PC-3 (cell line): ENCODE measurements at regions of chr12 and their contacts with region 1.

Region 1: GRCh38 chr12:122159882-122160281 is 14.1 kb downstream of the IL31 start:
- DNase-seq: no peak
- ATAC-seq: peak; percentile 38; the same call in 1 of the 2 replicates
- H3K4me3 ChIP-seq: no peak overlapping the region
- H3K27ac ChIP-seq: no peak overlapping the region
- H3K4me1 ChIP-seq: no peaks in the 10 kb centered on the region
- H3K27me3 ChIP-seq: no peaks in the 10 kb centered on the region
- CTCF ChIP-seq: no peak

Region 2: DNA sequence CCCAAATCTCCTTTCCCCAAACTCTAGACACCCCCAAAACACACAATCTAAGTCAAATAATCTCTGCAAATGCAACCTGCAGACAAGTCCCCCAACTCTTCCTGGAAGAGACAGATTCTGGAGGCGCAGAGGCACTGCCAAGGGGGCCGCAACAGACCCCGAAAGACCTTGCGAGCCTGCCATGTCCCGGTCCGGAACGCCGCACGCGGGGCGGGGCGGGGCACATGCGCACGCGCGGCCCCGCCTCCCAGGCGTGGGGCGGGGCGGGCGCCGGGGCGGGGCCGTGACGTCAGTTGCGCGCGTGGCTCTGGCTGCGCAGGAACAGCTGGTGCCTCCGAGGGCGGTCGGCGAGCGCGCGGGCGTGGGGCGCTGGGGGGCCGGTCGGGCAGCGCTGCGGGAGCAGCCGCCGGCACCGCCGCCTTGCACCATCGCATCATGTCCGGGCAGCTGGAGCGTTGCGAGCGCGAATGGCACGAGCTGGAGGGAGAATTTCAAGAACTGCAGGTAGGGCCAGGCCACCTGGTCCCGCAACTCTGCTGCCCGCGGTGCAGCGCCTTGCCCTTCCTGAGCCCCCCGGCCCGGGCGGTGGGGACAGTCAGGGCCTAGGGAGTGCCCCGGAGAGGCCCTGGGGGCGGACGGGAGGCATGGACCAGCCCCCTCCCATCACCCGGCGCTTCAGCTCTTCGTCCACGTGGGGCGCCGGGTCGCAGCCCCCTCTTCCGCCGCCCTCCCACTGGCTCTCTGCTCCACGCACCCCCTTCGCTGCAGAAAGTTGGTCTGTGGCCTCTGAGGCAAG is 447.2 kb before region 1 on chr12 and contains the start of gene TMEM120B:
- CTCF ChIA-PET with region 1: interaction called, 12 read pairs
- POLR2A ChIA-PET with region 1: no interaction called
- intact Hi-C with region 1: no loop called
- DNase-seq: peak; percentile 87
- ATAC-seq: peak; percentile 75
- H3K4me3 ChIP-seq: peak within 1 kb of the TSS; percentile 80
- H3K27ac ChIP-seq: peak within 1 kb of the TSS; percentile 43
- H3K4me1 ChIP-seq: peaks cover 25% of the 10 kb centered on the region; the same call in 1 of the 2 replicates
- H3K27me3 ChIP-seq: no peaks in the 10 kb centered on the region
- CTCF ChIP-seq: 0 out of 2 replicates have a peak, but pooled peaks have one; percentile 13
- total RNA-seq, gene TMEM120B: 18.5 and 25.4 TPM in 2 replicates

Region 3: DNA sequence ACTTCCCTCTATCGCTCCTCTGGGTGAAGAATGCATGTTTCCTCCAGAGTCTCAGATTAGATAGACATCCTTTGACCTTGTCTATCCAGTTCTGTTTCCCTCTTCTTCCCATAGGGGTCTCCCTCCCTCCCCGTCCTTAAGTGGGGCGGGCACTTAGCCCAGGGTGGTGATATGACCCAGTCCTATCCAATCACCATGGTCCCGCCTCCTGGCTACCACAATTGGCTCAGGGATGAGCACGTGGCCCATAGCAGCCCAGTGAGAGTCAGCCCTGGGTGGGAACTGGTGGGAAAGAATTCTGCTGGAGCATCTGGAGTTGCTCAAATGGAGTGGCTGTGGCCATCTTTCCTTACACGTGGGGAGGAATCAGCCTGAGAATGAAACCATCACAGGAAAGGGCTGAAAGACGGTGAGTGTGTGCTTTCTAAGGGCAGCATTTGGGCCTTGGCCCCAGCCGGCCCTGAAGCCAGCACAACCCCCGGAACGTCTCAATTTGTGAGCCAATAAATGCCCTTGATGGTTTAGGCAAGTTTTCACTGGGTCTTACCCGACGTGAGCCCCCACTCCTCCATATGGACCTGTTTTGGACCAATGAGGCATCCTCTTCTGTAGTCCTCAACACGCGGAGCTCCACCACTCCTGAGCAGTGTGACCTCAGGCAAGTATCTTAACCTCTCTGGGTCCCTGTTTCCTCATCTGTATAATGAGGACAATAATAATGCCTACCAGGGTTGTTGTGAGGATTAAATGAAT is 95.7 kb before region 1 on chr12:
- CTCF ChIA-PET with region 1: no interaction called
- POLR2A ChIA-PET with region 1: interaction called, 20 read pairs
- intact Hi-C with region 1: no loop called
- DNase-seq: peak; percentile 82
- ATAC-seq: peak; percentile 32
- H3K4me3 ChIP-seq: no peak overlapping the region
- H3K27ac ChIP-seq: peak overlapping the region; percentile 83
- H3K4me1 ChIP-seq: peaks cover 38% of the 10 kb centered on the region
- H3K27me3 ChIP-seq: no peaks in the 10 kb centered on the region
- CTCF ChIP-seq: peak; percentile 57

Region 4: DNA sequence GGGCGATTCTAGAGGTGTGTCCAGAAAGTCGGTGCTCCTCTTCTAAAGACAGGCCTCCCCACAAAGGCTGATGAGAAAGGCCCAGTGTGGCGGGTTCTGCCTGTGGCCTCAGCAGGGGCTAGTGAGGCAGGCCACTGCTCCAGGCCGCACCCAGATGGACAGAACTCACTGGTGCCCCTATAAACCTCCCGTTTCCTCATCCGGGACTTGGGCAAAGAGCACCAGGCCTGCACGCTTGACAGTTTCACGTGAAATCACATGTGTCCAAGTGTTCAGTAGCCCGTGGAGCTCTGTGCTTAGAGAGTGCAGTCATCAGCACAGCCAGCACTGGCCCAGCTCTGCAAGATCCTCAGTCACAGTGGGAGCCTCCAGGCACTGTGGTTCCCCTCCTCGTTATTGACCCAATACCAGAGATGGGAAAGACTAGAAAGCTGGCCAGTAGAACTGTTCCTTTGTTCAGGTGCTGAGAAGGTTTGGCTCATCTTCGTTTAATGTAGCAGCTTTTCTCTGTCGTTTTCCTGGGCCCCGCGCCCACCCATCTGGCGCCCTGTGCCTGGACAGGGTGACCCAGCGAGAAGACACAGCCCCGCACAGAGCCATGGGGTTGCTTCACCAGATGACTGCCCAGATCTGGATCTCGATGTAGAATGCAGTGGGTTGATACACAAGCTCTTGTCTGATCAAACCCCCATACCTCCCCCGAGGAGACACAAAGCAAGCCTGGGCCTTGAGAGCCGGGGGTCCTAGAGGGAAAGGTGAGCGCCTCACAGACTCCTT is 12.2 kb before region 1 on chr12:
- CTCF ChIA-PET with region 1: no interaction called
- POLR2A ChIA-PET with region 1: no interaction called
- intact Hi-C with region 1: loop called (anchors 1 kb)
- DNase-seq: no peak
- ATAC-seq: no peak
- H3K4me3 ChIP-seq: no peak overlapping the region
- H3K27ac ChIP-seq: no peak overlapping the region
- H3K4me1 ChIP-seq: no peaks in the 10 kb centered on the region
- H3K27me3 ChIP-seq: no peaks in the 10 kb centered on the region
- CTCF ChIP-seq: no peak

Region 5: GRCh38 chr12:122203301-122204166 is 43.7 kb after region 1 on chr12 and contains the start of gene B3GNT4:
- CTCF ChIA-PET with region 1: no interaction called
- POLR2A ChIA-PET with region 1: no interaction called
- intact Hi-C with region 1: no loop called
- DNase-seq: peak; percentile 72
- ATAC-seq: peak; percentile 78
- H3K4me3 ChIP-seq: peak within 1 kb of the TSS; percentile 65
- H3K27ac ChIP-seq: no peak within 1 kb of the TSS
- H3K4me1 ChIP-seq: no peaks in the 10 kb centered on the region
- H3K27me3 ChIP-seq: no peaks in the 10 kb centered on the region
- CTCF ChIP-seq: no peak
- total RNA-seq, gene B3GNT4: 4.0 and 4.8 TPM in 2 replicates

Region 6: DNA sequence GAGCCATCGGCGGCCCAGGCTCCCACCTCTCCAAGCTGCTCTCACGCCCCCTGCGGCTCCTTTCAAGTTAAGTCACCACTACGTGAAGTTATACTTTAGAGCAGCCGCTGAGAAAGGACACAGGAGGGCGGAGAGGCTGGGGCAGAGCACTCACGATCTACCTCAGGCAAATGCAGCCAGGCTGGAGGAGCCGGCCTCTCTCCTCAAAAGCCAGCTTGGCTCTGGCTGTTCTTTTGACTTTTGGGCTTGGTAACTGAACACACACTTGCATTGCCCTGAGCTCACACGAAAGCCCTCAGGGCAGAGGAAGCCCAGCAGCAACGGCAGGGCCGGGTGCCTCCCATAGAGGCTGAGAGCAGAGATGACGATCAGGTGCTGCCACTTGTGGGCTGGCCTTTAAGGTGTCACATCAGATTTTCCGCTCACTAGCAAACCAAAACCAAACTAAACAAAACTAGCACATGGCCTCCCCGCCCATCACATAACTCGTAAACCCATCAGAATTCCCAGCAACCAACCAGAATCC is 915.8 kb after region 1 on chr12:
- CTCF ChIA-PET with region 1: no interaction called
- POLR2A ChIA-PET with region 1: no interaction called
- intact Hi-C with region 1: no loop called
- DNase-seq: peak; percentile 71
- ATAC-seq: peak; percentile 71
- H3K4me3 ChIP-seq: no peak overlapping the region
- H3K27ac ChIP-seq: peak overlapping the region; percentile 60
- H3K4me1 ChIP-seq: peaks cover 24% of the 10 kb centered on the region
- H3K27me3 ChIP-seq: no peaks in the 10 kb centered on the region
- CTCF ChIP-seq: no peak